ENCODE measurements at regions of chr15 and their contacts with region 1.

Region 1: DNA sequence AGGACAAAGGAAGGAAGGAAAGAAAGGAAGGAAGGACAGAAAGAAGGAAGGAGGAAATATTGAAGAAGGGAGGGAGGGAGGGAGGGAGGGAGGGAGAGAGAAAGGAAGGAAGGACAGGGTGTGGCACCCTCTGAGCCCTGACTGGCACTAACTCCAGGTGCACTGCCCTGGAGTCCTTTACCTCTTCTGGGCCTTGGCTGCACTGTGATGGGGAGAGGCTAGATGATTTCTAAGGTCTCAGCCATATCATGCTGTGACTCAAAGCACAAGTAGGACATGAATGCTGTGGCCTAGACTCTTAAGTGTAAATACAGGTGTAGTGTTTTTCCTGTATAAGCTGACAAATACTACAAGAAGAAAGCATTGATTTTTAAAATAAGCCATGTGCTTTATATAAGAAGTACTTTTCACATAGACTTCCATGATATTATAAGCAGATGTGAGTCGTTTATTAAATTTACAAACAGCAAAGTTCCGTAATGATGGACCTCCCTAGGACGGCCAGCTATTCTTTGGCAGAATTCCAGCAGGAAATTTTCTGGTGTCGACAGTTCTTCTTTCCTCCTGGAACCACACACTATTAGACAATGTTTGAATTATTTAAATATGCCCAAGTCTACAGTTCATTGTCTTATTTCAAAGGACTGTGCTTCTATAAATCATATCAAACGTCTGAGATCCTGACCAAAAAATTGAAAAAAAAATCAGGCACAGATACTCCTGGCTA is 213.8 kb upstream of the C2CD4B start:
- DNase-seq: no peak
- H3K4me3 ChIP-seq: no peak overlapping the region
- H3K4me3 Mint-ChIP-seq: no peak overlapping the region
- H3K27ac ChIP-seq: no peak overlapping the region
- H3K27ac Mint-ChIP-seq: no peak overlapping the region
- H3K4me1 ChIP-seq: no peaks in the 10 kb centered on the region
- H3K4me1 Mint-ChIP-seq: no peaks in the 10 kb centered on the region
- H3K27me3 ChIP-seq: no peaks in the 10 kb centered on the region
- H3K27me3 Mint-ChIP-seq: peaks cover 13 to 38% of the 10 kb centered on the region in 2 donors

Region 2: DNA sequence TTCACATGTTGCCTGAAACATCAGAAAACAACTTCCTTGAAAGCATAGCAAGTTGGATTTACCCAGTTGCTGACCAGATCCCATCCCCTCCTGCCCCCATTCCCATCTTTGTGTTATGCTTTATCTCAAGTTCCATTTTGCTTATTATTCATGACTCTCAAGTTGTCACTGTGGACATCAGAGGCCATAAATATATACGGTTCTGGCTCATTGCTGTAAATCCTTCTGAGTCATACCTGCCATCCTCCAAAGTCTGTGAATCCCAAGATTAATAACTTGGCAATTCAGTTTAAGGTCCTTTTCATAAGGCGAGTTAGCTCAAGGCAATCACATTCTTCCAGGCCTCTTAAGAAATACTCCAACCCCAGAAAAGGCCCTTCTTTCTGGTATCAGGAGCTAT is 87.7 kb before region 1 on chr15:
- CTCF ChIA-PET with region 1: no interaction called
- POLR2A ChIA-PET with region 1: no interaction called
- DNase-seq: no peak
- H3K4me3 ChIP-seq: no peak overlapping the region
- H3K4me3 Mint-ChIP-seq: no peak overlapping the region
- H3K27ac ChIP-seq: no peak overlapping the region
- H3K27ac Mint-ChIP-seq: no peak overlapping the region
- H3K4me1 ChIP-seq: no peaks in the 10 kb centered on the region
- H3K4me1 Mint-ChIP-seq: no peaks in the 10 kb centered on the region
- H3K27me3 ChIP-seq: no peaks in the 10 kb centered on the region
- H3K27me3 Mint-ChIP-seq: peaks cover 16 to 58% of the 10 kb centered on the region in 2 donors

Region 3: GRCh38 chr15:62389885-62390790 is 11.2 kb after region 1 on chr15:
- CTCF ChIA-PET with region 1: no interaction called
- POLR2A ChIA-PET with region 1: interaction called, 11 read pairs
- DNase-seq: peak; percentile 12 to 52 (median 33)
- H3K4me3 ChIP-seq: peak within 1 kb of the TSS; percentile 84
- H3K4me3 Mint-ChIP-seq: peak within 1 kb of the TSS; percentile 93 to 98 (median 96)
- H3K27ac ChIP-seq: peak within 1 kb of the TSS; percentile 70
- H3K27ac Mint-ChIP-seq: peak within 1 kb of the TSS in 7 of 8 donors; percentile 22 to 90 (median 79)
- H3K4me1 ChIP-seq: peaks cover 15% of the 10 kb centered on the region
- H3K4me1 Mint-ChIP-seq: peaks cover 18 to 21% (median 19%) of the 10 kb centered on the region in 3 donors
- H3K27me3 ChIP-seq: peaks cover 14% of the 10 kb centered on the region
- H3K27me3 Mint-ChIP-seq: peaks cover 21 to 25% of the 10 kb centered on the region in 2 donors